ENCODE measurements at regions of chr1 and their contacts with region 1.

Region 1: DNA sequence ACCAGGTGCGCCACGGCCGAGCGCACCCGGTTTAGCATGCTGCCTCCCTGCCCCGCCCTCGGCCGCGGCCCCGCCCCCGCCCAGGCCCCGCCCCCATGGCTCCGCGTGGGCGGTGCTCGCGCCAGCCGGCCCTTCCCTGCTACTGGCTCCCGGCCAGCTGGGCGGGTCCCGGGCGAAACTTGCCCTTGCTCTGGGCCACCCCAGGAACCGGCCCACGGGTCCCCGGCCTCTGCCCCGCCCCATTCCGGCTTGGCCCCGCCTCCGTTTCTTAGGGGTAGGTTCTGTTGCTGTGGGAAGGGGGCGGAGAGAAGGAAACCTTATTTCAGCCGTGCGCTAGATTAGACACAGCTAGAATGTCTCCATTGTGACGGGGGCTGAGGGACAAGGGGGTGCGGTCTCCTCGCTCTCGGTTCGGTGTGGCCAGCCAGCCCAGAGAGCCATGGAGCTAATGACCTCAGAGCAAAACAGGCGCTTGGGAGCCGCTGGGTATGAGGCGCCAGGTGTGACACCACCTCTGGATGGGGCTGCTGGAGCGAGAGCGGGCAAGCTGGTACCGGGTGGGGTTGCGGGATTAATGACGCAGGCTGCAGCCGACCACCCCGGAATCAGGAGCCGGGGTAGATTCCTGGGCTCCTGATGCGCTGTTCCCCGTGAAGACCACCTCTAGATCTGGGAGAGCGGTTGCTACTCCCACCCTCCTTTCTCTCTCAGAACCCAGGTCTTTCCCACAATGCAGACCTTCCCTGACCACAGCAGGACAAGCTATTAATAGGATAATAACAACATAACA is at the start of gene PPM1J:
- DNase-seq: peak; percentile 97
- ATAC-seq: peak; percentile 78
- H3K4me3 ChIP-seq: peak within 1 kb of the TSS; percentile 70
- H3K27ac ChIP-seq: no peak within 1 kb of the TSS
- H3K4me1 ChIP-seq: peaks cover 13% of the 10 kb centered on the region; the same call in 1 of the 2 replicates
- H3K27me3 ChIP-seq: no peaks in the 10 kb centered on the region
- CTCF ChIP-seq: no peak
- total RNA-seq, gene PPM1J: 0.80 and 1.4 TPM in 2 replicates

Region 2: DNA sequence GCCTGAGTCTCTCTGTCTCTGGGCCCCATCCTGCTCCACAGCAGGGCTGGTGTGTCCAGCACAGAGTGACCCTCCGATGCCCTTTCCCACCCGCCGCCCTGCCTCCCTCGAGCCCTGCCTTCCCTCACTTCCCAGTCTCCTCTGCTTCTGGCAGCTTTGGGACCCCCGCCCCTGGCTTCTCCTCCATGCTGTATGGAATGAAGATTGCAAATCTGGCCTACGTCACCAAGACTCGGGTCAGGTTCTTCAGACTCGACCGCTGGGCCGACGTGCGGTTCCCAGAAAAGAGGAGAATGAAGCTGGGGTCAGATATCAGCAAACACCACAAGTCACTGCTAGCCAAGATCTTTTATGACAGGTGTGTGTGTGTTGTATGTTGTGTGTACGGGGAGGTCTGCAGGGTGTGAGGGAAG is 26.7 kb before region 1 on chr1:
- CTCF ChIA-PET with region 1: no interaction called
- POLR2A ChIA-PET with region 1: no interaction called
- intact Hi-C with region 1: no loop called
- DNase-seq: no peak
- ATAC-seq: no peak
- H3K4me3 ChIP-seq: no peak overlapping the region
- H3K27ac ChIP-seq: no peak overlapping the region
- H3K4me1 ChIP-seq: no peaks in the 10 kb centered on the region
- H3K27me3 ChIP-seq: no peaks in the 10 kb centered on the region
- CTCF ChIP-seq: no peak

Region 3: DNA sequence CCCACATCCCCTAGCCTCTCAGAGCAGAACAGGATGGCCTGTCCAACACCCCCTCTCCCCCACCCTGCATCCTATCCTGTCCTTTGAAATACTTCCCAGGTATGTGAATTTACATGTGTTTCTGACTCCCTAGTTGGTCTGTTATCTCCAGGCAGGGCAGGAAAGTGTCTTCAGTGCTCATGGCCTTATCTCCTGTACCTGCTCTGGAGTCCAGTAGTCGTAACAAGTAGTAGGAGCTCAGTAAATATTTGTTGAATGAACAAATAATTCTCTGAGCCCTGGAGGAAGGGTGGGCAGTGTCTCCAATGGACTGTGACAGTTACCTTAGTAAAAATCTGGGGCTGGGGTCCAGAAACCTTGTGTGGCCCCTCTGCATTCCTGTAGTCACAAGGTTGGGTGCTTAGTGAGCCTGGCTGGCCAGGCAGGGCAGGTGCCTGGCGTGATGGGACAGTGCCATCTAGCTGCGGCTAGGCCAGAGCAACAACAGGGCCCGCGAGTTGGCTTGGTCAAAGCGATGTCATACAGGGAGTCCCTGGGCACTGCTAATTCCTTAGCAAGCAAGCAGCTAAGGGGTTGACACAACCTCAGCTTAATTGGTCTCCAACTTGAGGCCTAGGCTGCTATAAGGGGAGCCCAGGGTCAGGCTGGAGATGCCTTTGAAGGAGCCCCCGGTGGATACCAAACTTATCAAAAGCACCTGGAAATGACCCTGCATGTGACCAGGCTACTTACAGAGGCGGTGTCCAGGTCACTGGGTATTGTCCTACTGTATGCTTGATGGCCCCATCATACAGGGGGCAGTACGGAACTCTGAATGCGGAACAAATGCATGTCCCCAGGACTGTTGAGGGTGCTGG is 88.7 kb after region 1 on chr1:
- CTCF ChIA-PET with region 1: interaction called, 23 read pairs
- POLR2A ChIA-PET with region 1: no interaction called
- intact Hi-C with region 1: loop called (anchors 1 kb)
- DNase-seq: peak; percentile 87
- ATAC-seq: peak; percentile 99
- H3K4me3 ChIP-seq: no peak overlapping the region
- H3K27ac ChIP-seq: no peak overlapping the region
- H3K4me1 ChIP-seq: 0 out of 2 replicates have a peak, but pooled peaks cover 6% of the 10 kb centered on the region
- H3K27me3 ChIP-seq: no peaks in the 10 kb centered on the region
- CTCF ChIP-seq: peak; percentile 93

Region 4: GRCh38 chr1:112866151-112866550 is 150.7 kb after region 1 on chr1:
- CTCF ChIA-PET with region 1: no interaction called
- POLR2A ChIA-PET with region 1: no interaction called
- intact Hi-C with region 1: loop called (anchors 5 kb)
- DNase-seq: peak; percentile 93
- ATAC-seq: peak; percentile 93
- H3K4me3 ChIP-seq: no peak overlapping the region
- H3K27ac ChIP-seq: peak overlapping the region; percentile 64
- H3K4me1 ChIP-seq: peaks cover 37% of the 10 kb centered on the region
- H3K27me3 ChIP-seq: no peaks in the 10 kb centered on the region
- CTCF ChIP-seq: no peak

Region 5: GRCh38 chr1:112882271-112882744 is 166.8 kb after region 1 on chr1:
- CTCF ChIA-PET with region 1: interaction called, 10 read pairs
- POLR2A ChIA-PET with region 1: no interaction called
- intact Hi-C with region 1: no loop called
- DNase-seq: no peak
- ATAC-seq: no peak
- H3K4me3 ChIP-seq: no peak overlapping the region
- H3K27ac ChIP-seq: no peak overlapping the region
- H3K4me1 ChIP-seq: peaks cover 6% of the 10 kb centered on the region
- H3K27me3 ChIP-seq: no peaks in the 10 kb centered on the region
- CTCF ChIP-seq: no peak

Region 6: GRCh38 chr1:112935461-112936289 is 220.2 kb after region 1 on chr1:
- CTCF ChIA-PET with region 1: no interaction called
- POLR2A ChIA-PET with region 1: no interaction called
- intact Hi-C with region 1: no loop called
- DNase-seq: peak; percentile 51
- ATAC-seq: peak; percentile 59
- H3K4me3 ChIP-seq: no peak overlapping the region
- H3K27ac ChIP-seq: peak overlapping the region; percentile 19
- H3K4me1 ChIP-seq: peaks cover 29% of the 10 kb centered on the region
- H3K27me3 ChIP-seq: no peaks in the 10 kb centered on the region
- CTCF ChIP-seq: no peak

Region 7: DNA sequence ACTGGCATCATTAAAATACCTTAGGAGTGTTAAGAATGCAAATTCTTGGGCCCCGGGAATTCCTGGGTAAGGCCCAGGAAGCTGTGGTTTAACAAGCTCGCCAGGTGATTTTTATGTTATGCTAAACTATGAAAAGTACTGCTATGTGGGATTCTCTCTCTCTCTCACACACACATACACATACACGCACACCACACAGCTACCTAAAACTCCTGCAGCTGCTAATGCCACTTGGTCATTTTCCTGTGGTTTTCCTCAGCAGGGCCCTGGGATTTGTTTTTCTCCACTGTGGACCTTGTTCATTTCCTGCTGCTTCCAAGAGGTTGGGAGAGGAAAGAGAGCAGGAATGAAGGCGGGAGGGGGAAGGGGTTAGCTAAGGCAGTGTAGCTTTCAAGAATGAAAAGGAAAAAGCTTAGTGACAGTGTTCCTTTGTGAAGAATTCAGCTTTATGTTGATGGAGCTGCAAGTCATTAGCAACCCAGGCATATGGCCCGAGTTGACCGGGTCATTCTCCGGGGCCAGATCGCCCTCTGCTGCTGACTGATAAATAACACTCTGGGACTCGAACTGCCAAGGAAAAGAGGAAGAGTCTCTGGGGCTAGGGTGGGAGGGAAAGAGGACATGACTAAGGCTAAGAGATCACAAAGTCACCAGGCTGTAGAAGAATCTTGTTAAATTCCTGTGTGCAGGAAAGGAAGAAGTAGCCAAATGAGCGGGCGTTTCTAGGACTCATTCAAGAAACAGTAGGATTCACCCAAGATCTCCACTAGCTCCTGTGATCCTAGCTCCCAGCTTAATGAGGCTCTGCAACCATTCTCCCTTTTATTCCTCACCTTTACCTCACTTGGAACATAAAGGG is 327.1 kb after region 1 on chr1:
- CTCF ChIA-PET with region 1: interaction called, 5 read pairs
- POLR2A ChIA-PET with region 1: no interaction called
- intact Hi-C with region 1: loop called (anchors 2 kb)
- DNase-seq: peak; percentile 90
- ATAC-seq: peak; percentile 91
- H3K4me3 ChIP-seq: peak overlapping the region; percentile 12; the same call in 1 of the 2 replicates
- H3K27ac ChIP-seq: peak overlapping the region; percentile 66
- H3K4me1 ChIP-seq: peaks cover 27% of the 10 kb centered on the region
- H3K27me3 ChIP-seq: no peaks in the 10 kb centered on the region
- CTCF ChIP-seq: peak; percentile 84

Region 8: GRCh38 chr1:113677250-113678158 is 962.0 kb after region 1 on chr1:
- CTCF ChIA-PET with region 1: no interaction called
- POLR2A ChIA-PET with region 1: no interaction called
- intact Hi-C with region 1: loop called (anchors 5 kb)
- DNase-seq: peak; percentile 75
- ATAC-seq: 0 out of 2 replicates have a peak, but pooled peaks have one; percentile 18
- H3K4me3 ChIP-seq: no peak overlapping the region
- H3K27ac ChIP-seq: no peak overlapping the region
- H3K4me1 ChIP-seq: peaks cover 38% of the 10 kb centered on the region
- H3K27me3 ChIP-seq: no peaks in the 10 kb centered on the region
- CTCF ChIP-seq: peak; percentile 85

Measured in PC-3 (cell line).